Activated CD4-positive, alpha-beta memory T cell treated with anti-CD3 and anti-CD28 coated beads for 36 hours (primary cell): ENCODE measurements at regions of chr2 and their contacts with region 1.

Region 1: DNA sequence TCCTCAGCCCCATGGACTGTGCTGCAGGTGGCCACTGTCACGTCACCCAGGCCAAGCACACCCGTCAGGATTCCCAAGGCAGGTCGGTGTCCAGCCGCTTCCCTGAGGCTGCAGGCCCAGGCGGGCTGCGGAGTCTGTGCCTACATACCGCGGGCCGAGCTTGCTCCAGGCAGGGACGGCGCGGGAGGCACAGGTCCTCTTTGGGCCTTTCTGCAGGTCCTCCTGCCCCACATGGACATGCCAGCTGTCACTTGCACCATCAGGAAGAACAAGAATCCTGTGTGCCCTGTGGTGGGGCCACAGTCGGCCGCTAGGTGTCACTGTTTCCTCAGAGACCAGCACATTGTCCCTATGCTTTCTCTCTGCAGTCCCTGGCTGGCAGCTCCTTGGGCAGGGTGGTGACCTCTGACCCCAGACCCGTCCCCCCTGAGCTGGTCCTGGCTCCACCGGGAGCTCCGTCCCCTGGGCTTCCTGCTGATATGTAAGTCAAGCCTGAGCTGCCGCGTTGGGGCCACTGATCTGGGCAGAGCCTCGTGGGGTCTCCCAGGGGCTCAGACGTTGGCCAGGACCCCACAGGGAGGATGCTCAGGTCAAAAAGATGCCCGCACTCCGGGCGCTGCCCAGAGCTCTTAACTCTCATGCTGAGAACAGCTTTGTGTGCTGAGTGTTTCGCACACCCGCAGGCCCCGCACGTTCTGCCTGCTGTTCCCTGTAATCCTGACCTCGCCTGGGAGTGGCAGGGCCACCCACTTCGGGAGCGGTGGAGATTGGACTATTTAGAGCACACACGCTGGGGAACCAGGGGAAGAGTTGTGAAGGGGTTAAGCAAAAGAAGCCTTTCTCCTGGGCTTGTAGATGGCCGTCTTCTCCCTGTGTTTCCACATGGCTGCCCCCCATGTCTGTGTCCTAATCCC is 17.3 kb upstream of the AGXT start:
- DNase-seq: peak; percentile 88
- H3K4me3 Mint-ChIP-seq: no peak overlapping the region
- H3K27ac Mint-ChIP-seq: no peak overlapping the region
- H3K4me1 Mint-ChIP-seq: no peaks in the 10 kb centered on the region
- H3K27me3 Mint-ChIP-seq: no peaks in the 10 kb centered on the region

Region 2: GRCh38 chr2:240861554-240861953 is 10.2 kb after region 1 on chr2:
- CTCF ChIA-PET with region 1: interaction called, 13 read pairs
- POLR2A ChIA-PET with region 1: no interaction called
- intact Hi-C with region 1: no loop called
- DNase-seq: no peak
- H3K4me3 Mint-ChIP-seq: no peak overlapping the region
- H3K27ac Mint-ChIP-seq: no peak overlapping the region
- H3K4me1 Mint-ChIP-seq: no peaks in the 10 kb centered on the region
- H3K27me3 Mint-ChIP-seq: peaks cover 3% of the 10 kb centered on the region

Region 3: GRCh38 chr2:240913810-240914644 is 62.7 kb after region 1 on chr2:
- CTCF ChIA-PET with region 1: interaction called, 10 read pairs
- POLR2A ChIA-PET with region 1: no interaction called
- intact Hi-C with region 1: no loop called
- DNase-seq: peak; percentile 72
- H3K4me3 Mint-ChIP-seq: no peak overlapping the region
- H3K27ac Mint-ChIP-seq: no peak overlapping the region
- H3K4me1 Mint-ChIP-seq: no peaks in the 10 kb centered on the region
- H3K27me3 Mint-ChIP-seq: peaks cover 21% of the 10 kb centered on the region